ENCODE measurements at regions of chr13 and their contacts with region 1.

Region 1: GRCh38 chr13:32586080-32586900 is at the start of gene PDS5B:
- DNase-seq: peak; percentile 98
- H3K4me3 ChIP-seq: peak within 1 kb of the TSS; percentile 76 to 96 (median 82)
- H3K27ac ChIP-seq: peak within 1 kb of the TSS; percentile 92 to 97 (median 94)
- H3K4me1 ChIP-seq: peaks cover 17 to 38% (median 36%) of the 10 kb centered on the region in 4 donors
- H3K27me3 ChIP-seq: no peaks in the 10 kb centered on the region
- CTCF ChIP-seq: peak in 2 of 3 experiments; percentile 95
- EP300 ChIP-seq: no peak
- POLR2A ChIP-seq: peak; percentile 22
- total RNA-seq, gene PDS5B: 33.1 to 58.6 (median 42.4) TPM

Region 2: GRCh38 chr13:32340914-32341313 is 245.4 kb before region 1 on chr13:
- intact Hi-C with region 1: no loop called
- DNase-seq: no peak
- H3K4me3 ChIP-seq: no peak overlapping the region
- H3K27ac ChIP-seq: no peak overlapping the region
- H3K4me1 ChIP-seq: no peaks in the 10 kb centered on the region
- H3K27me3 ChIP-seq: no peaks in the 10 kb centered on the region
- CTCF ChIP-seq: no peak
- EP300 ChIP-seq: no peak
- POLR2A ChIP-seq: no peak

Region 3: DNA sequence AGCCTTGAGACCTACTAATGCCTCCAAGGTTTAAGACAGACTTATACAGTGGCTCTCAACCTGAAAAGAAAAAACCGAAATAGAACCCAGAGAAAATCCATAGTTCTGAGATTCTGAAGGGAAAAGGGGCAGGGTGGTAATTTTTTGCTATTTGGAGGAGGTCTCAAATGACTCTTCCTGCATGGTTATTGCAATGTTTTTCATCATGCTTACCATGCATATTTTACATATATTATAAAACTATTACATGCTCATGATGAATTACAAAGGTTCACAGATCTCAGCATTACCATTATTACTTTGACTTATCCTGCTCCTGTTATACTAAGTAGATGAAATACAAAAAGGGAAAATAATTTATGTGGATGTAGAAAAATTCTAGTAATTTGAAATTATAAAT is 95.3 kb before region 1 on chr13:
- intact Hi-C with region 1: no loop called
- DNase-seq: no peak
- H3K4me3 ChIP-seq: no peak overlapping the region
- H3K27ac ChIP-seq: no peak overlapping the region
- H3K4me1 ChIP-seq: peaks cover 0 to 3% (median 0%) of the 10 kb centered on the region in 4 donors
- H3K27me3 ChIP-seq: no peaks in the 10 kb centered on the region
- CTCF ChIP-seq: no peak
- EP300 ChIP-seq: no peak
- POLR2A ChIP-seq: no peak

Region 4: GRCh38 chr13:32639502-32640105 is 53.3 kb after region 1 on chr13:
- intact Hi-C with region 1: loop called (anchors 2 kb)
- DNase-seq: no peak
- H3K4me3 ChIP-seq: no peak overlapping the region
- H3K27ac ChIP-seq: no peak overlapping the region
- H3K4me1 ChIP-seq: peaks cover 11 to 47% (median 32%) of the 10 kb centered on the region in 4 donors
- H3K27me3 ChIP-seq: no peaks in the 10 kb centered on the region
- CTCF ChIP-seq: peak; percentile 81 to 85 (median 84)
- EP300 ChIP-seq: no peak
- POLR2A ChIP-seq: no peak

Measured in esophagus muscularis mucosa (tissue), 4 donors.